Activated CD4-positive, alpha-beta T cell treated with anti-CD3 and anti-CD28 coated beads for 36 hours (primary cell): ENCODE measurements at regions of chr9 and their contacts with region 1.

Region 1: GRCh38 chr9:129884220-129885017 is 49.2 kb downstream of the USP20 start:
- DNase-seq: peak; percentile 98
- ATAC-seq: peak; percentile 55
- H3K4me3 Mint-ChIP-seq: peak overlapping the region; percentile 97
- H3K27ac Mint-ChIP-seq: peak overlapping the region; percentile 99
- H3K4me1 Mint-ChIP-seq: peaks cover 41% of the 10 kb centered on the region
- H3K27me3 Mint-ChIP-seq: no peaks in the 10 kb centered on the region

Region 2: GRCh38 chr9:129809346-129809745 is 75.1 kb before region 1 on chr9:
- CTCF ChIA-PET with region 1: no interaction called
- POLR2A ChIA-PET with region 1: no interaction called
- intact Hi-C with region 1: no loop called
- DNase-seq: no peak
- ATAC-seq: no peak
- H3K4me3 Mint-ChIP-seq: no peak overlapping the region
- H3K27ac Mint-ChIP-seq: no peak overlapping the region
- H3K4me1 Mint-ChIP-seq: peaks cover 26% of the 10 kb centered on the region
- H3K27me3 Mint-ChIP-seq: no peaks in the 10 kb centered on the region

Region 3: GRCh38 chr9:129823935-129824601 is 60.4 kb before region 1 on chr9 and contains the start of gene TOR1A:
- CTCF ChIA-PET with region 1: interaction called, 4 read pairs
- POLR2A ChIA-PET with region 1: no interaction called
- intact Hi-C with region 1: loop called in 1 of 2 experiments (anchors 1 kb)
- DNase-seq: peak; percentile 97
- ATAC-seq: peak; percentile 93
- H3K4me3 Mint-ChIP-seq: peak within 1 kb of the TSS; percentile 82
- H3K27ac Mint-ChIP-seq: peak within 1 kb of the TSS; percentile 63
- H3K4me1 Mint-ChIP-seq: peaks cover 14% of the 10 kb centered on the region
- H3K27me3 Mint-ChIP-seq: no peaks in the 10 kb centered on the region
- total RNA-seq, gene TOR1A: 34.9 to 39.7 TPM

Region 4: GRCh38 chr9:129895376-129896268 is 11.2 kb after region 1 on chr9:
- CTCF ChIA-PET with region 1: interaction called, 5 read pairs
- POLR2A ChIA-PET with region 1: interaction called, 4 read pairs
- intact Hi-C with region 1: loop called in 1 of 2 experiments (anchors 1 kb)
- DNase-seq: peak; percentile 73
- ATAC-seq: peak; percentile 33
- H3K4me3 Mint-ChIP-seq: no peak overlapping the region
- H3K27ac Mint-ChIP-seq: peak overlapping the region; percentile 99
- H3K4me1 Mint-ChIP-seq: peaks cover 71% of the 10 kb centered on the region
- H3K27me3 Mint-ChIP-seq: no peaks in the 10 kb centered on the region

Region 5: DNA sequence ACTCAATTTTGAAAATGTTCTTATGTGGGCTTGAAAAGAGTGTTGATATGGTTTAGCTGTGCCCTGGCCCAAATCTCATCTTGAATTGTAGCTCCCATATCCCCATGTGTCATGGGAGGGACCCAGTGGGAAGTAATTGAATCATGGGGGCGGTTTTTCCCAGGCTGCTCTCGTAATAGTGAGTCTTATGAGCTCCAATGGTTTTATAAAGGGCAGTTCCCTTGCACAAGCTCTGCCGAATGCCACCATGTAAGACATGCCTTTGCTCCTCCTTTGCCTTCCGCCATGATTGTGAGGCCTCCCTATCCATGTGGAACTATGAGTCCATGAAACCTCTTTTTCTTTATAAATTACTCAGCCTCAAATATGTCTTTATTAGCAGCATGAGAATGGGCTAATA is 21.9 kb after region 1 on chr9:
- CTCF ChIA-PET with region 1: no interaction called
- POLR2A ChIA-PET with region 1: no interaction called
- intact Hi-C with region 1: no loop called
- DNase-seq: no peak
- ATAC-seq: no peak
- H3K4me3 Mint-ChIP-seq: no peak overlapping the region
- H3K27ac Mint-ChIP-seq: peak overlapping the region; percentile 47
- H3K4me1 Mint-ChIP-seq: peaks cover 48% of the 10 kb centered on the region
- H3K27me3 Mint-ChIP-seq: no peaks in the 10 kb centered on the region

Region 6: GRCh38 chr9:129962889-129963703 is 78.7 kb after region 1 on chr9:
- CTCF ChIA-PET with region 1: interaction called, 18 read pairs
- POLR2A ChIA-PET with region 1: interaction called, 5 read pairs
- intact Hi-C with region 1: loop called in 1 of 2 experiments (anchors 1 kb)
- DNase-seq: peak; percentile 86
- ATAC-seq: peak; percentile 94
- H3K4me3 Mint-ChIP-seq: peak overlapping the region; percentile 76
- H3K27ac Mint-ChIP-seq: peak overlapping the region; percentile 96
- H3K4me1 Mint-ChIP-seq: peaks cover 87% of the 10 kb centered on the region
- H3K27me3 Mint-ChIP-seq: no peaks in the 10 kb centered on the region

Region 7: DNA sequence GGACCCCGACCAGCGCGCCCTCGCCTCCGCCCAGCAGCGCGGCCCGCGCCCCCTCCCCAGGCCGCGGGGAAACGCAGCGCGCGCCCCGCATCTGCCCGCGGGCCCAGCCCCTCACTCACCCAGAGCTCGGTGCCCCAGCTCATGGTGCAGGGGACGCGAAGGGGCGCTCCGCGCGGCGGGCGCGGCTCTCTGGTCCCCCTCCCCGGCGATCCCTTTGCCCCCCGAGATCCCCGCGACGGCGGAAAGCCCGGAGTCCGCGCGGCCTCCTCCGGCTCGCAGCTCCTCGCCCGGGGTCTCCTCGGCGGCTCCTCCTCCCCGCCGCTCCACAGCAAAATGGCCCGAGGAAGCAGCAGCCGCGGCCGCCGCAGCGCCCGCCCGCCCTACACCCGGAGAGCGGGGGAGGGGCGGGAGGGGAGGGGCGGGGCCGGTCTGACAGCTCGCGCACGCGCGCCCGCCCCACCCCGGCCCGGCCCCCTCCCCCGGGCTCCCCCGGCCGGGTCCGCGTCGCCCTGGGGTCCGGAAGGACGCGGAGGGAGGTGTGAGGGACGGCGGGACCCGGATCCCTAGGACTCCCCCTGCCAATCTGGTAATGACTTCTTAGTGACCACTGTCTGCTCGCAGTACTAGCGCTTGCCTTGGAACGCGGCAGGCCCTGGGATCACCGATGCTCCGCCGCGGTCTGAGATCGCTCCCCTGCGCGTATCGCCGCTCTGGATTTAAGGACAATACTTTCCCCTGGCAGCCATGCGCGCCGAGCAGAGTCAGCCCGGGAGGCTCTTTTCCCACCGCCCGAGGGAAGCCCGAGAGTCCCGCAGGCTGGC is 158.6 kb after region 1 on chr9 and contains the start of gene FNBP1:
- CTCF ChIA-PET with region 1: interaction called, 11 read pairs
- POLR2A ChIA-PET with region 1: interaction called, 21 read pairs
- intact Hi-C with region 1: loop called (anchors 1 to 2 kb)
- DNase-seq: peak; percentile 91
- ATAC-seq: peak; percentile 63
- H3K4me3 Mint-ChIP-seq: peak within 1 kb of the TSS; percentile 100
- H3K27ac Mint-ChIP-seq: peak within 1 kb of the TSS; percentile 100
- H3K4me1 Mint-ChIP-seq: peaks cover 33% of the 10 kb centered on the region
- H3K27me3 Mint-ChIP-seq: no peaks in the 10 kb centered on the region
- total RNA-seq, gene FNBP1: 254 to 354 TPM

Region 8: GRCh38 chr9:130243015-130243734 is 358.8 kb after region 1 on chr9:
- CTCF ChIA-PET with region 1: no interaction called
- POLR2A ChIA-PET with region 1: no interaction called
- intact Hi-C with region 1: loop called (anchors 2 to 10 kb)
- DNase-seq: peak; percentile 88
- ATAC-seq: peak; percentile 45
- H3K4me3 Mint-ChIP-seq: peak overlapping the region; percentile 8
- H3K27ac Mint-ChIP-seq: peak overlapping the region; percentile 26
- H3K4me1 Mint-ChIP-seq: peaks cover 32% of the 10 kb centered on the region
- H3K27me3 Mint-ChIP-seq: no peaks in the 10 kb centered on the region